ENCODE measurements at regions of chr7 and their contacts with region 1.

Region 1: DNA sequence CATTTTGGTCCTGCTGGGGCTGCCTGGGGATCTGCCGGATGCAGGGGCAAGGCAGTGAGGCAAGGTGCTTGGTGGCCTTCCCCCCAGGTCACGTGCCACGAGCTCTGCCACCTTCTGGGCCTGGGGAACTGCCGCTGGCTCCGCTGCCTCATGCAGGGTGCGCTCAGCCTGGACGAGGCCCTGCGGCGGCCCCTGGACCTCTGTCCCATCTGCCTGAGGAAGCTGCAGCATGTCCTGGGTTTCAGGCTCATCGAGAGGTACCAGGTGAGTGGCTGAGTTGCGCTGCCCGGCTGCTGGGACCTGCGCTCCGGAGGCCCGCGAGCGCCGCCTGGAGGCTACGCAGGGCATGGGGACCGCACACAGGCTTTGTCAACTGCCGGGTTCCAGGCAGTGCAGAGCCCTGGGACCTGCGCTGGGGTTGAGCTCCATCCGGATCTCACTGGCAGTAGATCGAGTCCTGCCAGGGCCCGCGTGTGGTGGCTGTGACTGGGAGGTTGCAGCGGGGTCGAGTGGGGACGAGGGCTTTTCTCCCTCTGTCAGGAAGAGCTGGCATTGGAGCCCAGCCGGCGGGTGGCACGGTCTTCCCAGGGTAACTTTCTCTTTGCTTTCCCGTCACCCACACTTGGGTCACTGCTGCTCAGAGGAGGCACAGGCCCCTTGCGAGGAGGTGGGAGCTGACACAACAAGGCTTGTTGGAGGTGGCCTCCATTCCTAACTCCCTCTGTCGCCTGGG is 21.7 kb downstream of the AMZ1 start:
- DNase-seq: peak; percentile 84
- H3K4me3 Mint-ChIP-seq: peak overlapping the region; percentile 57
- H3K27ac Mint-ChIP-seq: peak overlapping the region; percentile 63
- H3K4me1 Mint-ChIP-seq: peaks cover 26% of the 10 kb centered on the region
- H3K27me3 Mint-ChIP-seq: peaks cover under 1% of the 10 kb centered on the region

Region 2: GRCh38 chr7:2553831-2554570 is 155.7 kb before region 1 on chr7:
- CTCF ChIA-PET with region 1: no interaction called
- intact Hi-C with region 1: no loop called
- DNase-seq: no peak
- H3K4me3 Mint-ChIP-seq: peak overlapping the region; percentile 86
- H3K27ac Mint-ChIP-seq: no peak overlapping the region
- H3K4me1 Mint-ChIP-seq: peaks cover 31% of the 10 kb centered on the region
- H3K27me3 Mint-ChIP-seq: no peaks in the 10 kb centered on the region

Region 3: GRCh38 chr7:2670720-2671391 is 38.9 kb before region 1 on chr7:
- CTCF ChIA-PET with region 1: interaction called, 54 read pairs
- intact Hi-C with region 1: loop called (anchors 1 kb)
- DNase-seq: peak; percentile 81
- H3K4me3 Mint-ChIP-seq: no peak overlapping the region
- H3K27ac Mint-ChIP-seq: no peak overlapping the region
- H3K4me1 Mint-ChIP-seq: peaks cover 5% of the 10 kb centered on the region
- H3K27me3 Mint-ChIP-seq: peaks cover 12% of the 10 kb centered on the region

Region 4: DNA sequence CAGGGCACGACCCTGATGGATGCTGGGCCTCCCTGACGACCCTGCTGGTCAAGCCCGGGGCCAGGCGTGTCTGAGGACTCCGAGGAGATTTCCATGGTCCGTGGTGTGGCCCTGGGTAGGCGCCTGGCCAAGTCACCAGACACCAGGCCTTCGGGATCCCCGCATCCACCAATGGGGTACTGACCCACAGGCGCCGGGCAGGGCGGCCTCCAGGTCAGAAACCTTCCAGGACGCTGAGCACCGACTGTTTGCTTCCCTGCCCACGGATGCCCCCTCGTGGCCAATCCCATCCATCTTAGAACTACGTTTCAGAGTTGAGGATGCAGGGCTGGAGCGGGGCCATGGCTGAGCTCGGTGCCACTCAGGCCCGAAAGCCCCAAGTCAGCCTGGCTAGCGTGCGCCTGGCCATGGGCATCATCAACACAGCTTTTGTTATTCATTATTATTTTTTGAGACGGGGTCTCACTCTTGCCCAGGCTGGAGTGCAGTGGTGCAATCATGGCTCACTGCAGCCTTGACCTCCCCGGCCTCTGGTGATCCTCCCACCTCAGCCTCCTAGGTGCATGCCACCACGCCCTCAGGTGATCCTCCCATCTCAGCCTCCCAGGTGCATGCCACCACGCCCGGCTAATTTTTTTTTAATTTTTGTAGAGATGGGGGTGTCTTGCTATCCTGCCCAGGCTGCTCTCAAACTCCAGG is 28.8 kb before region 1 on chr7:
- CTCF ChIA-PET with region 1: interaction called, 25 read pairs
- intact Hi-C with region 1: no loop called
- DNase-seq: peak; percentile 72
- H3K4me3 Mint-ChIP-seq: no peak overlapping the region
- H3K27ac Mint-ChIP-seq: no peak overlapping the region
- H3K4me1 Mint-ChIP-seq: no peaks in the 10 kb centered on the region
- H3K27me3 Mint-ChIP-seq: peaks cover 1% of the 10 kb centered on the region

Region 5: DNA sequence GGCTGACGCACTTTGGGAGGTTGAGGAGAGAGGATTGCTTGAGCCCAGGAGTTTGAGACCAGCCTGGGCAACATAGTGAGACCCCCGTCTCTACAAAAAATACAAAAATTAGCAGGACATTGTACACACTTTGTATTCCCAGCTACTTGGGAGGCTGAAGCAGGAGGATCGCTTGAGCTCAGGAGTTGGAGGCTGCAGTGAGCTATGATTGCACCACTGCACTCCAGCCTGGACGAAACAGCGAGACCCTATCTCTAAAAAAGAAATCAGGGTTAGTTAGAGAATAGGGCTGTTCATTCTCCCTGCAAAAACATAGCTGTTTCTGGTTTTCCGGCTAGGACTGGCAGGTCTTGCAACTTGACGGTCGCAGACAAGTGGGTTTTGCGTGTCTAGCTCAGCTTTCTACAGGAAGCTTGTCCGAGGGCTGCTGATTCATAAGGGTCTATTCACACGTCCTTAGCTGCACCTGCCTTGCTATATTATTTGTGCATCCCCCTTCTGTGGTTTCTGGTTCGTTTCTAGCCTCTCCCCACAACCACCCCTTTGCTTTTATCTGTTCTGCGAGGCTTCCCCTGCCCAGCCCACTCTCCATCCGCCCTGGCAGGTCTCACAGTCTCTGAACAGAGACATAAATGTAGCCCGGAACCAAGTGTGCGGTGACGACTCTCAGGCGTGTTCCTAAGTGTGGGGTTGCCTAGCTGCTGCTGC is 11.0 kb before region 1 on chr7:
- CTCF ChIA-PET with region 1: interaction called, 29 read pairs
- intact Hi-C with region 1: no loop called
- DNase-seq: peak; percentile 74
- H3K4me3 Mint-ChIP-seq: peak overlapping the region; percentile 23
- H3K27ac Mint-ChIP-seq: no peak overlapping the region
- H3K4me1 Mint-ChIP-seq: peaks cover 19% of the 10 kb centered on the region
- H3K27me3 Mint-ChIP-seq: no peaks in the 10 kb centered on the region

Measured in activated naive CD4-positive, alpha-beta T cell treated with anti-CD3 and anti-CD28 coated beads for 36 hours (primary cell).